CD4-positive, alpha-beta memory T cell (primary cell): ENCODE measurements at regions of chr6 and their contacts with region 1.

Region 1: DNA sequence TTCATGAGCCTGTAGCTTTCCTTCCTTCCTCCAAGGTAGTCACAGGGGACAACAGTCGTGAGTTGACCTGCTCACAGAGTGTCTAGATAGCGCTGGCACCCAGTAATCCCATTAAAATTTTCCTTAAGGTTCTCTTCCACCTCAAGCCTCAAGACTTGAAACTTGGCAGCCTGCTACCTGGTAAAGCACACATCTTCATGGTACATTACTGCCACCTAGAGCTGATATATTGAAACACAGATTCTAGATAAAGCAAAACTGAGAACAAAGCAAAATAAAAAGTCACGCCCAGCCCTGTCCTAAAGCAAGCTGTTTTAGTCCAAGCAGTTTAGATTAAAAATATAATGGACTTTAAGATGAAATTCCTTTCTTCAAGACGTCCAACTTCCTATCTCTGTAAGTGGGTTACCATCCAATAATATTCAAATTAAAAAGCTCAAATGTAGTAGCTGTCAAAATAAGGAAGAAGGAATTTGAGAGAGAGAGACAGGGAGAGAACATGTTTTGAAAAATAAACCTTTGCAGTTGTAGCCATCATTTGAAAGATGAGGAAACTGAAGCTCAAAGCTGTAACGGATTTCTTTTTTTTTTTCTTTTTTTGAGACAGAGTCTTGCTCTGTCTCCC is 50.7 kb upstream of the CD83 start:
- DNase-seq: peak in 4 of 5 donors; percentile 47 to 52 (median 50)
- H3K4me3 ChIP-seq: no peak overlapping the region
- H3K4me3 Mint-ChIP-seq: no peak overlapping the region
- H3K27ac ChIP-seq: no peak overlapping the region
- H3K27ac Mint-ChIP-seq: no peak overlapping the region
- H3K4me1 ChIP-seq: no peaks in the 10 kb centered on the region
- H3K4me1 Mint-ChIP-seq: peaks cover 0 to 5% (median 2%) of the 10 kb centered on the region in 4 donors
- H3K27me3 ChIP-seq: no peaks in the 10 kb centered on the region
- H3K27me3 Mint-ChIP-seq: peaks cover 10 to 15% of the 10 kb centered on the region in 2 donors

Region 2: DNA sequence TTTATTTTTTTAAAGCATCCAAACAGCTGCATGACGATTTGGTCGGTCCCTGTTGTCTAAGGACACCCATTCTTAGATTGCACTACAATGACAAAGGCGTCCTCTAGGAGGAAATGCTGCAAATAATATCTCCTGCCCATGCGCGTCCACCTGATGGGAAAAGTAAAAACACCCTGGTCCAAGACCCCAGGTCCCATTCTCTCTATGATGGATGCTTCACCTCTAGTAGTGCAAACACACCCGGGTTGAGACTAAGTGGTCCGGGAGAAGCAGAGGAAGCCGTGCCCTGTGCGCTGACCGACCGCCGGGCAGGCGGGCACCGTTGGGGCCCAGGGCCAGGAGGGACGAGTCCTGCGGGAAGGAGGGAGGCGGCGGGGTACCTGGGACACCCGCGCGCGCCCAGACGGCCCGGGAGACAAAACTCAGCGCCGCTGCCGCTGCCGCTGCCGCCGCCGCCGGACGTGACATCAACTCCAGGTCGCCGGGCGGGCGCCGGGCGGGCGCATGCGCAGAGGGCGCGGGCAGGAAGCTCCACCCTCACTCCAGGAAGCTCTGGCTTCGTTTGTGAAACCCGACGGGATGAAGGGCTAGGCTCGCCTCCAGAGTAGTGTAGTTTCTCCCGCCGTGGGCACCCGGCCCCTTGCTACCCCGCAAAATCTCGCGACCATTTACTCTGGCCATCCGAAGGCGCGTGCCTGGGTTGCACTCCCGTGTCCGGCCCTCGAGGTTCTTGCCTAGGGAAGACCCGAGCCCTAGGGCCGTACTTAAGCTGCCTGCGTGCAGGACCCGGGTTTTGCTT is 738.6 kb before region 1 on chr6 and contains the start of gene TBC1D7:
- CTCF ChIA-PET with region 1: interaction called, 11 read pairs
- POLR2A ChIA-PET with region 1: no interaction called
- intact Hi-C with region 1: no loop called
- DNase-seq: peak; percentile 92 to 95 (median 94)
- H3K4me3 ChIP-seq: peak within 1 kb of the TSS; percentile 89 to 91
- H3K4me3 Mint-ChIP-seq: peak within 1 kb of the TSS; percentile 94 to 98 (median 96)
- H3K27ac ChIP-seq: peak within 1 kb of the TSS; percentile 90
- H3K27ac Mint-ChIP-seq: peak within 1 kb of the TSS; percentile 96 to 99 (median 98)
- H3K4me1 ChIP-seq: peaks cover 23% of the 10 kb centered on the region
- H3K4me1 Mint-ChIP-seq: peaks cover 9 to 33% (median 22%) of the 10 kb centered on the region in 4 donors
- H3K27me3 ChIP-seq: no peaks in the 10 kb centered on the region
- H3K27me3 Mint-ChIP-seq: no peaks in the 10 kb centered on the region
- total RNA-seq, gene TBC1D7: 12.6 to 13.2 TPM

Region 3: DNA sequence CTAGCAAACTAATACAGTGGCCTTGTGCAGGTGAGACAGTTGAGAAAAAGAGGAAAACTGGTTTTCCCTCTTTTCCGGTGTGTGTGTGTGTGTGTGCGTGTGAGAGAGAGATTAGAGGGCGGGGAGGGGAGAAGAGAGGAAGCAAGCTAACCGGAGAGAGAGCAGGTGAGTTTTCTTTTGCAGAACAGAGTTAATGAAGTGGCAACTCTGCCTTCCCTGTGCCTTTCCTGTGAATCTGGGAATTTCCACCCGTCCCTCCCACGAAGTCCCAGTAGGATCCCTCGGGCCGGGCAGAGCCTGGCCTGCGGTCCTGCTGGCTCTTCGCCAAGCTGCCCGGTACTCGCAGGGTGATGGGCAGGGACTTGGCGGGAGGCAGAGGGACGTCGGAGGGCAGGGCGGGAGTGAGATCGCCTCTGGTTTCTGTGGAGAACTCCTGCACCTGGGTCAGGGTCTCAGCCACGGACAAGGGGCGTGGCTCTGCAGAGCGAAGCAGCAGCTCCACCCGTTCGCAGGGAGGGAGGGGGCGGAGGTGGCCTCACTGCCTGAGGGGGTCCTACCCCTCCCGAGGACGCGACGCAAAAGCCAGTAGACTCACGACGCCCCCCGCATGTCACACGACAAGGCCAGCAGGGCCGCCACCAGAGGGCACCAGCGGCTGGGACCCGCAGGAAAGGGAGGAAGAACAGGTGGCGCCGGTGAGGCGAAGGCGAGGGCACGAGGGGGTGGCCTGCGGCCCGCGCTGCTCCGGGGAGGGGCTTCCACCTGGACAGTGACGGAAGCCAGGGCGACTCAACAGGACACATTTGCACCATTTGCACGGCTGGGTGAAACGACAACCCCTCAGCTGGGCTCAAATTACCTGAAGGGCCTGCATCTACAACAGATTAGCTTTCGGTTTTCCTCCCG is 193.4 kb before region 1 on chr6:
- CTCF ChIA-PET with region 1: interaction called, 36 read pairs
- POLR2A ChIA-PET with region 1: no interaction called
- intact Hi-C with region 1: loop called (anchors 1 kb)
- DNase-seq: peak; percentile 52 to 64 (median 56)
- H3K4me3 ChIP-seq: peak overlapping the region; percentile 15 to 60
- H3K4me3 Mint-ChIP-seq: peak overlapping the region; percentile 75 to 93 (median 88)
- H3K27ac ChIP-seq: no peak overlapping the region
- H3K27ac Mint-ChIP-seq: peak overlapping the region in 5 of 7 donors; percentile 11 to 69 (median 65)
- H3K4me1 ChIP-seq: peaks cover 13% of the 10 kb centered on the region
- H3K4me1 Mint-ChIP-seq: peaks cover 8 to 18% (median 9%) of the 10 kb centered on the region in 4 donors
- H3K27me3 ChIP-seq: no peaks in the 10 kb centered on the region
- H3K27me3 Mint-ChIP-seq: peaks cover 4 to 9% of the 10 kb centered on the region in 2 donors

Region 4: GRCh38 chr6:13908955-13909381 is 157.9 kb before region 1 on chr6:
- CTCF ChIA-PET with region 1: interaction called, 113 read pairs
- POLR2A ChIA-PET with region 1: no interaction called
- intact Hi-C with region 1: loop called (anchors 1 kb)
- DNase-seq: peak; percentile 57 to 71 (median 67)
- H3K4me3 ChIP-seq: no peak overlapping the region
- H3K4me3 Mint-ChIP-seq: no peak overlapping the region
- H3K27ac ChIP-seq: no peak overlapping the region
- H3K27ac Mint-ChIP-seq: no peak overlapping the region
- H3K4me1 ChIP-seq: peaks cover 4% of the 10 kb centered on the region
- H3K4me1 Mint-ChIP-seq: peaks cover 0 to 6% (median 4%) of the 10 kb centered on the region in 4 donors
- H3K27me3 ChIP-seq: no peaks in the 10 kb centered on the region
- H3K27me3 Mint-ChIP-seq: peaks cover 18 to 21% of the 10 kb centered on the region in 2 donors

Region 5: GRCh38 chr6:14055541-14055940 is 11.4 kb before region 1 on chr6:
- CTCF ChIA-PET with region 1: interaction called, 17 read pairs
- POLR2A ChIA-PET with region 1: interaction called, 3 read pairs
- intact Hi-C with region 1: no loop called
- DNase-seq: no peak
- H3K4me3 ChIP-seq: no peak overlapping the region
- H3K4me3 Mint-ChIP-seq: no peak overlapping the region
- H3K27ac ChIP-seq: no peak overlapping the region
- H3K27ac Mint-ChIP-seq: no peak overlapping the region
- H3K4me1 ChIP-seq: no peaks in the 10 kb centered on the region
- H3K4me1 Mint-ChIP-seq: no peaks in the 10 kb centered on the region
- H3K27me3 ChIP-seq: no peaks in the 10 kb centered on the region
- H3K27me3 Mint-ChIP-seq: peaks cover 12 to 22% of the 10 kb centered on the region in 2 donors

Region 6: DNA sequence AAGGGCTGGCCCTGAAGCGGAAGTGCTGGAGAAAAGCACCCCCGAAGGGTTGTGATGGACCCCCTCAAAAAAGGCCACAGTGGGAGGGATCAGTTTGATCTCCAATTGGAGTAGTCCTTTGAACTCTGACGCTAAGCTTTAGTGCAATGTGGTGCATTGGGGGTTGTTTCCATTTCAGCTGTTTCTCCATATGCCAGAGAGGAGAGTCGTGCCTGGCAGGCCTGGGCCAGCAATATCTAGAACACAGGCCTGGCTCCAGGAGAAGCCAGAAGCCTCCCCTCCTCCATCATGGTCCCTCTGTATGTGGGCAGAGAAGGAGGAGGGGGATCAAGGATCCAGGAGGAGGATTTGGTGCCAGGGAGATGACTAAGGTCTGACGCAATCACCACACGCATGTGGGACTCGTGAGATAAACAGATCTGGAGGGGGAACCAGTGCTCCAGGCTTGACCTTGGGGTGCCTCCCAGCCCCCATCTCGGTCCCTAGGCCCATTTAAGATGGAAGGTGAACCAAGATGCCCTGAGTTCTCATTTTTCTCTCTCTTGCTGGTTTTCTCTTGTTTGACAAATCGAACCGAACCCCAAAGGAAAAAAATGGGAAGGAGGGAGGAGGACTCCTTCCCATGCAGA is 661.6 kb after region 1 on chr6:
- CTCF ChIA-PET with region 1: no interaction called
- POLR2A ChIA-PET with region 1: no interaction called
- intact Hi-C with region 1: no loop called
- DNase-seq: no peak
- H3K4me3 ChIP-seq: no peak overlapping the region
- H3K4me3 Mint-ChIP-seq: peak overlapping the region in 2 of 8 donors; percentile 13 to 23
- H3K27ac ChIP-seq: no peak overlapping the region
- H3K27ac Mint-ChIP-seq: peak overlapping the region in 4 of 7 donors; percentile 17 to 91 (median 76)
- H3K4me1 ChIP-seq: peaks cover 73% of the 10 kb centered on the region
- H3K4me1 Mint-ChIP-seq: peaks cover 32 to 55% (median 38%) of the 10 kb centered on the region in 4 donors
- H3K27me3 ChIP-seq: no peaks in the 10 kb centered on the region
- H3K27me3 Mint-ChIP-seq: no peaks in the 10 kb centered on the region